HEK293 (cell line): ENCODE measurements at regions of chr16 and their contacts with region 1.

Region 1: DNA sequence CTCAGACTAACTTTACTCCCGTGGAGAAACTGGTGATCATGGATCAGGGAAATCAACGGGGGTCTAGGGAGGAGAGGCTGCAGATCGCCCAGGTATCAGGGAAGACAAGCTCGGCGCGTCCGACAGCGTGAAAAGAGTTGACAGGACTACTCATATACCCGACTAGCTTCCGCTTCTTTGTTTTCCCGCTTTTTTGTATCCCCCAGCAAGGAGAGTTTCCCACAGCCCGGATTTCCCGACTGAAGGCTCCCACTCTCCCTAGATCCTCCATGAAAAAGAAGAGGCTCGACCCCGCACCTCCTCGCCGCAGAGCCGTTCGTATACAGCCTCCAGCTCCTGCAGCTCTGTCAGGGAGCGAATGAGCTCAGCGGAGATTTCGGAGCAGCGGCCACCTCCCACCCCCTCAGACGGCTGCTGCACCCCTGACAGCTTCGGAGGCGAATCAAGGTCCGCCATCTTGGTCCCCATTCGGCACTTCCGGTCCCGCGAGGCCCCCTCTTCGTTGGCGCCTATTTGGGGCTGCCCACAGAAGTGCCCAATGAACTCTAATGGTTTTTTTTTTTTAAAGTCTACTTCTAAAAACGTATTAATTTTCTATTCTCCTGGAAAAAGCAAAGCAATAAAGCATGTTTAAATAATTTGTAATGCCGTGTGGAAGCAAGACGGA is at the start of gene COG4:
- H3K4me3 ChIP-seq: peak within 1 kb of the TSS; percentile 91
- H3K27ac ChIP-seq: peak within 1 kb of the TSS; percentile 99
- H3K4me1 ChIP-seq: peaks cover 12% of the 10 kb centered on the region
- CTCF ChIP-seq: no peak

Region 2: DNA sequence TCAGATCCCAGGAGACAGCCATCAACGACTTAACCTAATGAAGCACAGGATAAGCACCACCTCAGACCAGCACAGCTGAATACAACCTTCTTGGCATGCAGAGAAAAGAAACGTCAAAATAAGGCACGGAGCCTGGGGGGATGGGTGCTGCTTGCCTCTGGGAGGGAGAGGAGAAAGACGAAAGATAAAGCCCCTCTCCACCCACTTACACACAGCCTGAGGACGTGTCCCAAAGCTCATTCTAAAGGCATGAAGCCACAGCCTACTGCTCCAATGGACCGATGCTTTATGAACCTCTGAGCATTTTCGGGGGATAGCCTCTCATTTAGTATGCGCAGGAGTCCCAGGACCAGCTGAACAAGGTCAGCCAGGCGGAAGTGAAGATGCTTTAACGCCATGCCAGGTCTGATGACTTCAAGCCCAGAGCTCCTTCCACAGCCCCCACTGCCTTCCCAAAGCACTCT is 115.4 kb before region 1 on chr16:
- CTCF ChIA-PET with region 1: no interaction called
- POLR2A ChIA-PET with region 1: interaction called, 12 read pairs
- H3K4me3 ChIP-seq: no peak overlapping the region
- H3K27ac ChIP-seq: no peak overlapping the region
- H3K4me1 ChIP-seq: no peaks in the 10 kb centered on the region
- CTCF ChIP-seq: no peak

Region 3: DNA sequence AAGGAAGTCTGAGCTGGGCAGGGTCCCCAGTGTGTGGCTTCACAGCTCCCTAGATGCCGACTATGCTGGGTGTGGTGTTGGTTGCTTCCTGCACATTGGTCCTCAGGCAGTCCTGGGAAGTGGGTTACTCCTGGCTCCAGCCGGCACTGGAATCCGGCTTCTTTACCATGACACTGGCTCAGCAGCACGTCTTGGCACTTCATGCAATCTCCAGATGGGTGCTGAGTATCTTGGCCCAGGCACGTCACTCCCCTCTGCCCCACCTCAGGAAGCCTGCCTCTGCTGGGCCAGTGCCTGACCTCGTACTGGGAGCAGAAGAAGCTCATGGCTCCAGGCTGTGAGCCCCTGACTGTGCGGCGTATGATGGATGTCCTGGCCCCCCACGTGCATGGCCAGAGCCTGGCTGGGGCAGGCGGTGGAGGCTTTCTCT is 44.3 kb before region 1 on chr16:
- CTCF ChIA-PET with region 1: no interaction called
- POLR2A ChIA-PET with region 1: no interaction called
- H3K4me3 ChIP-seq: no peak overlapping the region
- H3K27ac ChIP-seq: no peak overlapping the region
- H3K4me1 ChIP-seq: peaks cover 2% of the 10 kb centered on the region; the same call in 1 of the 2 replicates
- CTCF ChIP-seq: no peak